Left cardiac atrium (tissue), 4 donors: ENCODE measurements at regions of chr7 and their contacts with region 1.

Region 1: GRCh38 chr7:56009695-56010094 is 41.5 kb downstream of the PSPH start:
- DNase-seq: no peak
- ATAC-seq: no peak

Region 2: GRCh38 chr7:55794527-55794926 is 215.2 kb before region 1 on chr7:
- intact Hi-C with region 1: no loop called
- DNase-seq: no peak
- ATAC-seq: no peak

Region 3: DNA sequence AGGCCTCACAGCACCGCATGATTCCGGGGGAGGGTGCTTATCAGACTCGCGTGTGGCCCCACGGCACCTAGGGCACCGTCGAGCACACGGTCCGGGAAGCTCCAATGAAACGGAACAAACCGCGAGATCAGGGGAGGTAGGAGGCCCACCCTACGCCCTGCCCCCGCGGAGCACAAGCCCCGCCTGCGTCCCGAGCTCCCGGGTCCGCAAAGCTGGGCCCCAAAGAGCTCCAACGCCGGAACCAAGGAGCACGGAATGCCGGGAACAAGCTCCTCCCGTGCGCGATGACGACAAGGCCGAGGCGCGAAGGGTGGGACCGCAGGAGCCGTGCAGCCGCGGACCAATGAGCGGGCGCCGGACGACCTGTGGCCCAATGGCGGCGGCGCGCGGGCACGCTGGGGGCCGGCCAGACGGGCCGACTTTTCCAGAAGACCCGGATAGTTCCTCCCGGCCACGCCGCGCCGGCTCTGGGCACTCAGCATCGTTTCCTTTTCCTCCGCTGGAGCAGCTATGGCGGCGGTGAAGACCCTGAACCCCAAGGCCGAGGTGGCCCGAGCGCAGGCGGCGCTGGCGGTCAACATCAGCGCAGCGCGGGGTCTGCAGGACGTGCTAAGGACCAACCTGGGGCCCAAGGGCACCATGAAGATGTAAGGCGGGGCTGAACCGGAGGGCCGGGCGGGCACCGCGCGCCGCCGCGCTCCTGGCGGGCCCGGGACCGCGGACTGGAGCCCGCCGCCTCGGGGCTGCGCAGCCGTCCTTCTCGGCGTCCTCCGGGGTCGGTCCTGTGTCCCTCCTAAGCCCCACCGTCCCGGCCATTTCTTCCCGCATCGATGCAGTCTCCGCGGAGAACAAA is 41.9 kb after region 1 on chr7 and contains the starts of genes CCT6A and PSPH:
- intact Hi-C with region 1: no loop called
- DNase-seq: peak; percentile 99
- ATAC-seq: peak; percentile 99
- total RNA-seq, gene CCT6A: 61.9 to 74.9 TPM
- total RNA-seq, gene PSPH: 7.5 to 13.3 TPM

Region 4: GRCh38 chr7:56063882-56064625 is 54.4 kb after region 1 on chr7 and contains the start of gene SUMF2:
- intact Hi-C with region 1: no loop called
- DNase-seq: peak; percentile 93
- ATAC-seq: peak; percentile 99
- total RNA-seq, gene SUMF2: 50.6 to 52.5 TPM

Region 5: DNA sequence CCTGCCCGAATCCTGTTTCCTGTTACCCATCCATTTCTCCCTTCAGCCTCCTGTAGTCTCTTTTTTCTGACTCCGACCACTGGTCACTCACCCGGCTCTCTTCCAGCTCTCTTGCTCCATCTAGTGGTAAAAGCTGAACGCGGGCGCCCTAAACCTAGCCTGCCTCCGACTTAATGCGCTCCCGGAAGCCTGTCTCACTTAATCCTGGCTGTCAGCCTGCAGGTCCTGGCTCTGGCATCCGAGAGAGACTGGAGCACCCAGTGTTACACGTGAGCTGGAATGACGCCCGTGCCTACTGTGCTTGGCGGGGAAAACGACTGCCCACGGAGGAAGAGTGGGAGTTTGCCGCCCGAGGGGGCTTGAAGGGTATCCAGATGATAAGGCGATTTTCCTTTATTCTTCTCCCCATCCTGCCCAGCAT is 64.7 kb after region 1 on chr7:
- intact Hi-C with region 1: loop called (anchors 2 to 10 kb)
- DNase-seq: peak; percentile 87
- ATAC-seq: peak; percentile 91 to 93